Transverse colon (tissue), 4 donors: ENCODE measurements at regions of chr6 and their contacts with region 1.

Region 1: GRCh38 chr6:136643850-136644596 is 93.8 kb upstream of the MAP7 start:
- DNase-seq: peak; percentile 93
- H3K4me3 ChIP-seq: no peak overlapping the region
- H3K27ac ChIP-seq: peak overlapping the region; percentile 4 to 58 (median 32)
- H3K4me1 ChIP-seq: peaks cover 0 to 17% (median 8%) of the 10 kb centered on the region in 4 donors
- H3K27me3 ChIP-seq: no peaks in the 10 kb centered on the region
- CTCF ChIP-seq: peak; percentile 76 to 94 (median 88)
- EP300 ChIP-seq: no peak
- POLR2A ChIP-seq: no peak

Region 2: GRCh38 chr6:136582711-136583471 is 61.1 kb before region 1 on chr6:
- in situ Hi-C with region 1: loop called in 1 of 4 experiments (anchors 10 kb)
- intact Hi-C with region 1: no loop called
- DNase-seq: no peak
- H3K4me3 ChIP-seq: no peak overlapping the region
- H3K27ac ChIP-seq: peak overlapping the region; percentile 12 to 65 (median 43)
- H3K4me1 ChIP-seq: peaks cover 0 to 12% (median 2%) of the 10 kb centered on the region in 4 donors
- H3K27me3 ChIP-seq: no peaks in the 10 kb centered on the region
- CTCF ChIP-seq: peak; percentile 56 to 68 (median 62)
- EP300 ChIP-seq: no peak
- POLR2A ChIP-seq: no peak

Region 3: DNA sequence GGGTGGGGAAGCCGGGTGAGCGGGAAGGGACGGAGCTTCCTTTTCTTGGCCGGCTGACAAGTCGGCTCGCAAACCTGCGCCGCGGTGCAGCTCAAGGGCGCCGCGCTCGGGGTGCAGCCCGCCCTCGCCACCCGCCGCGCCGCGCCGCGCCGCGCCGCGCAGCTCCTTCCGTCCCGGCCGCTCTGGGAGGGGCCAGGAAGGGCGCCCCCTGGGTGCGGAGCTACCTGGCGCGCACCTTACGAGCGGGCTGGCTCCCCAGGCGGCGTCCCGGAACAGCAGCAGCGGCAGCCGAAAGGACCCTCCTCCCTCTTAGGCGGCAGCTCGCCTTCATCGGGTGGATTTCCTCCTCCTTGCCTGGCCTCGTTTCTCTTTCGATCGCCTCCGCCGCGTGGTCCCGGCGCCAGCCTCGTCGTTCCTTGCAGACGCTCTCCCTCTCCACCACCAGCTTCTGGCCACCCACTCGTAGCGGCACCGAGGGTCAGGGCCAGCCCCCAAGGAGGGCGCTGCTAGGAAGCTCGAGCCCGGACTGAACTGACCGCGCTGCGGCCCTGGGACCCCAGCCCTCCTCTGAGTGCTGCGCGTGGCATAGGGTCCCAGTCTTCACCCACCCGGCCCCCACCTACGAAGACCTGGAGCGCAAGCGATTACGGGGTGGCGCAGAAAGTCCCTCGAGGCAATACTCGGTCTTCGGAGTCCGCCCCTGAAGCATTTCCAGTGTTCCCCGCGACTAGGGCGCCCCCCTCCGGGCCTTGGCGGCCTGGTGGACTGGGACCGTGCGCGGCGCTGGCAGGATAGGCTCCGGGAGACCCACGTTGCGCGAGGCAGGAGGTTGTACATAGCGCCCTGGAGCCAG is 148.6 kb after region 1 on chr6 and contains the start of gene MAP3K5:
- in situ Hi-C with region 1: loop called (anchors 5 to 10 kb)
- intact Hi-C with region 1: loop called (anchors 2 kb)
- DNase-seq: peak; percentile 96
- H3K4me3 ChIP-seq: peak within 1 kb of the TSS; percentile 75 to 96 (median 86)
- H3K27ac ChIP-seq: peak within 1 kb of the TSS; percentile 95 to 99 (median 97)
- H3K4me1 ChIP-seq: peaks cover 0 to 42% (median 22%) of the 10 kb centered on the region in 4 donors
- H3K27me3 ChIP-seq: no peaks in the 10 kb centered on the region
- CTCF ChIP-seq: peak; percentile 67 to 83 (median 78)
- EP300 ChIP-seq: no peak
- POLR2A ChIP-seq: peak; percentile 71
- total RNA-seq, gene MAP3K5: 16.2 to 52.7 (median 34.8) TPM

Region 4: GRCh38 chr6:136866872-136867416 is 222.9 kb after region 1 on chr6:
- in situ Hi-C with region 1: no loop called
- intact Hi-C with region 1: loop called (anchors 10 kb)
- DNase-seq: no peak
- H3K4me3 ChIP-seq: no peak overlapping the region
- H3K27ac ChIP-seq: no peak overlapping the region
- H3K4me1 ChIP-seq: no peaks in the 10 kb centered on the region
- H3K27me3 ChIP-seq: no peaks in the 10 kb centered on the region
- CTCF ChIP-seq: no peak
- EP300 ChIP-seq: no peak
- POLR2A ChIP-seq: no peak